ENCODE measurements at regions of chr12 and their contacts with region 1.

Region 1: GRCh38 chr12:69639400-69640016 is 28.8 kb upstream of the LRRC10 start:
- DNase-seq: peak; percentile 66
- H3K4me3 ChIP-seq: no peak overlapping the region
- H3K27ac ChIP-seq: no peak overlapping the region
- H3K4me1 ChIP-seq: no peaks in the 10 kb centered on the region
- H3K27me3 ChIP-seq: no peaks in the 10 kb centered on the region
- CTCF ChIP-seq: peak; percentile 85 to 91
- POLR2A ChIP-seq: no peak

Region 2: DNA sequence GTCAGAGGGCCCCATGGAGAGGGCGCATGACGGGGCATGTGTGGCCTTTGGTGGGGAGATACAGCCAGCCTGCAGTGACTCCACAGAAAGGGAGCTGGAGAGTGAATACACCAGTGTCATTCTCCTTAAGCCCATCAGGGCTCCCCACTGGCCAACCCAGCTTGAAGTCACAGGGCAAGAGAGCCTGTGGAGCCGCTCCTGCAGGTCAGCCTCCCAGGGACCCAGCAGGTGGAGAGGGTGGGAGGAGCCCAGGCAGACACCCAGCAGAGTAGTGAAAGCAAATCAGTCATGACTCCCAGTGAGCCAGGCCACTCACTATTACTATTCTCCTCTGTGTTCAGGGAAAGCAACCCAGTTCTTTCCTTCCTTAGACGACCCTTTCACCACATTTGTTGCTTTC is 596.5 kb before region 1 on chr12:
- CTCF ChIA-PET with region 1: no interaction called
- POLR2A ChIA-PET with region 1: no interaction called
- dilution Hi-C with region 1: no loop called
- intact Hi-C with region 1: no loop called
- DNase-seq: no peak
- H3K4me3 ChIP-seq: no peak overlapping the region
- H3K27ac ChIP-seq: no peak overlapping the region
- H3K4me1 ChIP-seq: no peaks in the 10 kb centered on the region
- H3K27me3 ChIP-seq: peaks cover 3 to 11% of the 10 kb centered on the region in 2 experiments
- CTCF ChIP-seq: no peak
- POLR2A ChIP-seq: no peak

Region 3: GRCh38 chr12:69290545-69291277 is 348.8 kb before region 1 on chr12:
- CTCF ChIA-PET with region 1: interaction called, 9 read pairs
- POLR2A ChIA-PET with region 1: no interaction called
- dilution Hi-C with region 1: no loop called
- intact Hi-C with region 1: loop called (anchors 1 kb)
- DNase-seq: peak; percentile 70
- H3K4me3 ChIP-seq: no peak overlapping the region
- H3K27ac ChIP-seq: no peak overlapping the region
- H3K4me1 ChIP-seq: no peaks in the 10 kb centered on the region
- H3K27me3 ChIP-seq: peaks cover 14 to 35% of the 10 kb centered on the region in 2 experiments
- CTCF ChIP-seq: peak; percentile 77 to 86
- POLR2A ChIP-seq: no peak

Region 4: GRCh38 chr12:69359531-69360347 is 279.8 kb before region 1 on chr12 and contains the start of gene YEATS4:
- CTCF ChIA-PET with region 1: interaction called, 133 read pairs
- POLR2A ChIA-PET with region 1: no interaction called
- dilution Hi-C with region 1: no loop called
- intact Hi-C with region 1: loop called (anchors 1 kb)
- DNase-seq: peak; percentile 92
- H3K4me3 ChIP-seq: peak within 1 kb of the TSS; percentile 6 to 89 (median 65)
- H3K27ac ChIP-seq: peak within 1 kb of the TSS; percentile 69
- H3K4me1 ChIP-seq: peaks cover 7% of the 10 kb centered on the region
- H3K27me3 ChIP-seq: no peaks in the 10 kb centered on the region
- CTCF ChIP-seq: no peak
- POLR2A ChIP-seq: peak; percentile 68
- total RNA-seq, gene YEATS4: 16.5 and 16.7 TPM in 2 replicates

Region 5: DNA sequence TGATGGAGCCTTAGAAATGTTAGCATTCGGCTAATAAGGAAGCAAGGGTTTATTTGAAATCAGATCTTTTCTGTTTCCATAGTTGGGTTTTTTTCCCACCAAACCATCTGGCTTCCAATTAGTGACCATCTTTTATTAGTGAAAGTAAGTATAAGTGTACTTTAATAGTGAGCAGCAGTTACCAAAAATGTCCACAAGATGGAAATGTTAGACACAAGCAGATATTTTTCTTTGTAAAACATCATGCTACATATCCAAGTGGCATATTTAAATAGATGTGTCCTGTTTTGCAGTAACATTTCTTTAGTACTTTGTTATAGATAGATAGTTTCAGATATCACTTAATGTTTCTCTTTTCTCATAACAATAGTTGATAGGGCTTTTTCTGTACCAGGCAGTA is 251.1 kb before region 1 on chr12:
- CTCF ChIA-PET with region 1: interaction called, 37 read pairs
- POLR2A ChIA-PET with region 1: no interaction called
- dilution Hi-C with region 1: no loop called
- intact Hi-C with region 1: loop called (anchors 1 kb)
- DNase-seq: peak; percentile 79
- H3K4me3 ChIP-seq: no peak overlapping the region
- H3K27ac ChIP-seq: no peak overlapping the region
- H3K4me1 ChIP-seq: peaks cover 6% of the 10 kb centered on the region
- H3K27me3 ChIP-seq: no peaks in the 10 kb centered on the region
- CTCF ChIP-seq: peak; percentile 37 to 41
- POLR2A ChIP-seq: no peak

Region 6: DNA sequence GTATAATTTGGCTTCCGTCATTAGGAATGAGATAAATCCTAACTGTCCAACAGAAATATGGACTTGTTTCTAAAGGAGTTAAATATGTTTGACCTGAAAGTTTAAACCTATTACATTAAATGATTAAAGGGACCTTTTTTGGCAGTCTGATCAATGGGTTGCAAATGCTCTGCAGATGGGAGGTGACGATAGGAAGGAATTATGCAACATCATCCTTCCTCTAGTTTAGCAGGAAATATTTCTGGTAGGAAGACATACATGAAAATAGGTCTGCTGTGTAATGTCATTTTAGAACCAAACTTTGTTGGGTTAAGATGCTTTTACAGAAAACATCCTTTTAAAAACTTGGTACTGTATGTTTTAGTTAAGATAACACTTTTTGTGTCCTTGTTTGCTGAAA is 31.4 kb before region 1 on chr12:
- CTCF ChIA-PET with region 1: interaction called, 13 read pairs
- POLR2A ChIA-PET with region 1: no interaction called
- dilution Hi-C with region 1: no loop called
- intact Hi-C with region 1: no loop called
- DNase-seq: no peak
- H3K4me3 ChIP-seq: no peak overlapping the region
- H3K27ac ChIP-seq: no peak overlapping the region
- H3K4me1 ChIP-seq: peaks cover 4% of the 10 kb centered on the region
- H3K27me3 ChIP-seq: peaks cover under 1 to 2% of the 10 kb centered on the region in 2 experiments
- CTCF ChIP-seq: no peak
- POLR2A ChIP-seq: no peak

Region 7: DNA sequence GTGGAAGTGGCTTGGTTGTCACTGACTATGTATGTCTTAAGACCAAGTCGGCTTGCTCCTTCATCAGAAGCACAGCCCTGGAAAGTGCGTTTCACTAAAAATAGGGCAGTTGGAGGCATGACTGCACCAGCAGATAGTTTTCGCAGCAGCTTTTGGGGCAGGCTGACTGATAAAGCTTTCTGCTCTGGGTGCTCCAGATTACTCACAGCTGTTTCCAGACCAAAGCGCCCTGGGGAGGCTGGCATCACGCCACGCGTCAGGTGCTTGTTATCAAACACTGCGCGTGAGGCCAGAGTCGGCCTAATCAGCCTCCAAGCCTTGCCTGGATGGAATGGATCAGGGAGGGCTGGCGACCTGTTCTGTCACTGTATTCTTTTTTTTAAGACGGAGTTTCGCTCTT is 15.5 kb before region 1 on chr12:
- CTCF ChIA-PET with region 1: interaction called, 13 read pairs
- POLR2A ChIA-PET with region 1: no interaction called
- dilution Hi-C with region 1: no loop called
- intact Hi-C with region 1: no loop called
- DNase-seq: no peak
- H3K4me3 ChIP-seq: no peak overlapping the region
- H3K27ac ChIP-seq: no peak overlapping the region
- H3K4me1 ChIP-seq: no peaks in the 10 kb centered on the region
- H3K27me3 ChIP-seq: peaks cover 2% of the 10 kb centered on the region in 2 experiments
- CTCF ChIP-seq: no peak
- POLR2A ChIP-seq: no peak

Measured in endothelial cell of umbilical vein (primary cell).